Naive thymus-derived CD4-positive, alpha-beta T cell (primary cell): ENCODE measurements at regions of chr11 and their contacts with region 1.

Region 1: GRCh38 chr11:35343033-35343598 is 76.2 kb downstream of the SLC1A2 start:
- DNase-seq: peak in 8 of 9 donors; percentile 19 to 69 (median 54)
- ATAC-seq: peak; percentile 62
- H3K4me3 ChIP-seq: no peak overlapping the region
- H3K4me3 Mint-ChIP-seq: peak overlapping the region; percentile 33 to 82 (median 66)
- H3K27ac ChIP-seq: peak overlapping the region; percentile 2
- H3K27ac Mint-ChIP-seq: peak overlapping the region; percentile 82 to 91 (median 85)
- H3K4me1 ChIP-seq: peaks cover 3 to 43% of the 10 kb centered on the region in 2 donors
- H3K4me1 Mint-ChIP-seq: peaks cover 29 to 80% (median 59%) of the 10 kb centered on the region in 7 donors
- H3K27me3 ChIP-seq: no peaks in the 10 kb centered on the region
- H3K27me3 Mint-ChIP-seq: peaks cover 0 to 2% (median 0%) of the 10 kb centered on the region in 5 donors

Region 2: GRCh38 chr11:35040221-35040942 is 302.7 kb before region 1 on chr11:
- CTCF ChIA-PET with region 1: no interaction called
- POLR2A ChIA-PET with region 1: no interaction called
- intact Hi-C with region 1: loop called in 1 of 2 experiments (anchors 1 kb)
- DNase-seq: peak in 8 of 9 donors; percentile 53 to 89 (median 74)
- ATAC-seq: peak; percentile 88
- H3K4me3 ChIP-seq: peak overlapping the region; percentile 60
- H3K4me3 Mint-ChIP-seq: peak overlapping the region; percentile 74 to 94 (median 89)
- H3K27ac ChIP-seq: peak overlapping the region; percentile 86
- H3K27ac Mint-ChIP-seq: peak overlapping the region; percentile 90 to 99 (median 97)
- H3K4me1 ChIP-seq: peaks cover 29 to 45% of the 10 kb centered on the region in 2 donors
- H3K4me1 Mint-ChIP-seq: peaks cover 28 to 77% (median 68%) of the 10 kb centered on the region in 7 donors
- H3K27me3 ChIP-seq: no peaks in the 10 kb centered on the region
- H3K27me3 Mint-ChIP-seq: peaks cover 0 to 29% (median 0%) of the 10 kb centered on the region in 5 donors

Region 3: GRCh38 chr11:35272391-35272902 is 70.7 kb before region 1 on chr11:
- CTCF ChIA-PET with region 1: no interaction called
- POLR2A ChIA-PET with region 1: no interaction called
- intact Hi-C with region 1: loop called in 1 of 2 experiments (anchors 1 kb)
- DNase-seq: peak in 5 of 9 donors; percentile 11 to 58 (median 15)
- ATAC-seq: peak; percentile 85
- H3K4me3 ChIP-seq: peak overlapping the region; percentile 15
- H3K4me3 Mint-ChIP-seq: peak overlapping the region in 9 of 10 donors; percentile 26 to 54 (median 45)
- H3K27ac ChIP-seq: no peak overlapping the region
- H3K27ac Mint-ChIP-seq: peak overlapping the region; percentile 22 to 94 (median 82)
- H3K4me1 ChIP-seq: peaks cover 14 to 21% of the 10 kb centered on the region in 2 donors
- H3K4me1 Mint-ChIP-seq: peaks cover 21 to 56% (median 51%) of the 10 kb centered on the region in 7 donors
- H3K27me3 ChIP-seq: no peaks in the 10 kb centered on the region
- H3K27me3 Mint-ChIP-seq: peaks cover 0 to 9% (median 0%) of the 10 kb centered on the region in 5 donors

Region 4: GRCh38 chr11:35330931-35331330 is 12.2 kb before region 1 on chr11:
- CTCF ChIA-PET with region 1: interaction called, 3 read pairs
- POLR2A ChIA-PET with region 1: interaction called, 8 read pairs
- intact Hi-C with region 1: loop called (anchors 1 kb)
- DNase-seq: peak in 8 of 9 donors; percentile 39 to 78 (median 68)
- ATAC-seq: peak; percentile 91
- H3K4me3 ChIP-seq: no peak overlapping the region
- H3K4me3 Mint-ChIP-seq: peak overlapping the region in 9 of 10 donors; percentile 2 to 68 (median 61)
- H3K27ac ChIP-seq: peak overlapping the region; percentile 69
- H3K27ac Mint-ChIP-seq: peak overlapping the region; percentile 88 to 98 (median 90)
- H3K4me1 ChIP-seq: peaks cover 37 to 51% of the 10 kb centered on the region in 2 donors
- H3K4me1 Mint-ChIP-seq: peaks cover 36 to 76% (median 67%) of the 10 kb centered on the region in 7 donors
- H3K27me3 ChIP-seq: no peaks in the 10 kb centered on the region
- H3K27me3 Mint-ChIP-seq: no peaks in the 10 kb centered on the region

Region 5: DNA sequence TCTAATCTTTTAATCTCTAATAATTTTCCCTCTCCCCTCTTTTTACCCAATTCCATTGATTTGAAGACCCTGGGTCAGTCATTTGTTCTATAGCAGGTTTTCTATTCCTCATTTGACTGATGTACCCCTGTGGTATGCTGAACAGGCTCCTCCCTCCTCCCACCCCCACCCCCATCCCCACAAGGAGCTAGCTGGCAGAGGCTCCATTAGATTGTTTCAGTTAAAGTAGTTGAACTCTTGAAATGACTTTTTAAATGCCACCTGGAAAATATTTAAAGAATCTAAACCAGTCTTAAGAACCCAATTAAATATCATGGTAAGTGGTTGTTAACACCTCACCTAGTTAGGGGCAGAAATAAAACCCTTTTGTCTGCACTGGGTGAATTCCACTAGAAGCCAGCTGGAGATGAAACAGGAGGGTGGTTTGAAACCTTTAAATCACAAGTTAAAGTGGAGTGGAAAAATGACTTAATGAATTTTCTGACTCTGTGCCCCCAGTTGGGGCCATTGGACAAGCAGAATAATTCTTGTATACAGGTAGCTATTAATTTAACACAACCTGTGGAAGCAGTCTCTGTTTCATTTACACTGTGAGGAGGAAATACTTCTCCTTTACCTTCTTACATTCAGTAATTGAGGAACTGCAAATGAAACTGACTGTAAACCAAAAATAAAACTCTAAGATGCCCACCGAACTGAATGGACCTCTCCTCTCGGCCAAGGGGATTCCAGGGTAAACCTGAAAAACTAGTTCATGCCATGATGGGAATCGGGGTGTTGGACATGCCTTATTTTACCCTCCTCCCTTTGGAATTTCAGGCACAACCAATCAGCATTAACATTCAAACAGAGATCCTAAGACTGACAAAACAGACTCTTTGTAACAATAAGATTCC is 983.7 kb after region 1 on chr11:
- CTCF ChIA-PET with region 1: no interaction called
- POLR2A ChIA-PET with region 1: no interaction called
- intact Hi-C with region 1: no loop called
- DNase-seq: no peak
- ATAC-seq: no peak
- H3K4me3 ChIP-seq: no peak overlapping the region
- H3K4me3 Mint-ChIP-seq: no peak overlapping the region
- H3K27ac ChIP-seq: no peak overlapping the region
- H3K27ac Mint-ChIP-seq: no peak overlapping the region
- H3K4me1 ChIP-seq: no peaks in the 10 kb centered on the region
- H3K4me1 Mint-ChIP-seq: no peaks in the 10 kb centered on the region
- H3K27me3 ChIP-seq: no peaks in the 10 kb centered on the region
- H3K27me3 Mint-ChIP-seq: peaks cover 5 to 20% (median 9%) of the 10 kb centered on the region in 5 donors